Ascending aorta (tissue), 2 donors: ENCODE measurements at regions of chr5 and their contacts with region 1.

Region 1: GRCh38 chr5:87267574-87268125 is at the start of gene RASA1:
- DNase-seq: peak; percentile 70 to 95
- H3K4me3 ChIP-seq: peak within 1 kb of the TSS; percentile 70 to 84
- H3K27ac ChIP-seq: peak within 1 kb of the TSS; percentile 84 to 89
- H3K4me1 ChIP-seq: peaks cover 0 to 7% of the 10 kb centered on the region in 2 donors
- H3K27me3 ChIP-seq: no peaks in the 10 kb centered on the region
- CTCF ChIP-seq: no peak
- total RNA-seq, gene RASA1: 30.5 TPM

Region 2: GRCh38 chr5:86232246-86232645 is 1035.4 kb before region 1 on chr5:
- intact Hi-C with region 1: no loop called
- DNase-seq: no peak
- H3K4me3 ChIP-seq: no peak overlapping the region
- H3K27ac ChIP-seq: no peak overlapping the region
- H3K4me1 ChIP-seq: no peaks in the 10 kb centered on the region
- H3K27me3 ChIP-seq: no peaks in the 10 kb centered on the region
- CTCF ChIP-seq: no peak

Region 3: DNA sequence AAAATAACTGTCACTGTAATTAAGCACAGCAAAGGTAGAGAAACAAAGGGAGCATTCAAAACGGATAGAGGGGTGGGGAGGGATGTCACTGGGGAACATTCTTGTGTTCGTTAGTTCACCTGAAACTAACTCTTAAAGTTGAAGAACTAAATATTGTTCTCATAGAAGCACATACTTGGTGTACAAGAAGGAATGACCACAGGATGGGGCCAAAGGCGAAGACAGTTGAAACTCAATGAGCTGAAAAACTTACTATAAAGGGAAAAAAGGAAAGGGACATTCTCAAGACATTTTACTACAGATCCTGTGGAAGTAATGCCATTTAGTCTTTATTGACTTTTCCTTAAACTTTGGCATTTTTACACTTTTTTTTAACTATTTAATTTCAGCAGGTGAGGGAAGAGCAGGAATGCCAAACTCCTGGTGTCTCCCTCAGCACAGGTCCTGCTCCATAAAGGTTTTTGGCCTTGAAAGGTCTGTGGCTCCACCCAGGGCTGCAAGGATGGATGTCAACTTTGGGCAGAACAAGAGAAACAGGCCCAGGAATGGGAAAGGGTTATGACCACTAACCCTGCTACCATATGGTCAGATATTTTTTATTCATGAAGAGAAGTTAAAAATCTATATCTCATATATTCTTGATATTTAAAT is 197.6 kb before region 1 on chr5:
- intact Hi-C with region 1: loop called (anchors 10 kb)
- DNase-seq: peak in 1 of 2 donors; percentile 68
- H3K4me3 ChIP-seq: no peak overlapping the region
- H3K27ac ChIP-seq: no peak overlapping the region
- H3K4me1 ChIP-seq: no peaks in the 10 kb centered on the region
- H3K27me3 ChIP-seq: no peaks in the 10 kb centered on the region
- CTCF ChIP-seq: peak; percentile 38 to 73 (median 61)

Region 4: DNA sequence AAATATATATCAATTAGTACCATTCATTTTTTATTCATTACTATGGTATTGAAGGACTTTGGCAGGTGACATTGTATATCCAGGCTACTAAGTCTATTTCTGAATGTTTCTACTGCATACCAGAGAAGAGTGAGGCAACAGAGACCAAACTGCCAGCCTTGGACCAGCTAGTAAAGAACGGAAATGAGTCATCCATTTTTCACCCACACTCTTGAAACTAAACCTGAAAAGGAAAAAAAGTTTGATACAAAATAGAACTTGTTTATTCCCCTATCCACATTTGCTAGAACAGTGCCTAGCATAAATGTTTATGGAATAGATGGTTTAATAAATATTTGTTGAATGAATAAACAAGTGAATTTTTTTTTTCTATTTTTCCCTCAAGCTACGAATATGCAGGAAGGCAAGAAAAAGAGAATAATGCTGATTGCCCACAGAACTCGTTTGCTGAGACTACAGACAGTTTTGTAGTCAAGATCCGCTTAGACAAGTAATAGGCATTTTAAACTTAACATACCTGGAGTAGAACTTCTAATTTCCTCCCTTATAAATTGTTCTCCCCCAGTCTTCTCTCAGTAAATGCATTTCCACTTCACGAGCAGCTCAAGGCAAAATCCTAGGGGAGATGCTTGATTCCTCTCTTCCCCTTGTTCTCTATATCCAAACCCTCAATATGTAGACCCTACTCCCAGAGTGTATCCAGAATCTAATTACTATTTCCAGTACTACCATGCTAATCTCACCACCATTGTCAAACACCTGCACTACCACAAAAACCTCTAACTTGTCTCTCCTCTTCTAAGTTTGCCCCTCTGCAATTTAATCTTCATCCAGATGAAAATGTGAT is 146.1 kb before region 1 on chr5:
- intact Hi-C with region 1: loop called (anchors 2 kb)
- DNase-seq: peak; percentile 10 to 78
- H3K4me3 ChIP-seq: peak overlapping the region in 1 of 2 donors; percentile 11
- H3K27ac ChIP-seq: peak overlapping the region; percentile 80 to 89
- H3K4me1 ChIP-seq: peaks cover 0 to 16% of the 10 kb centered on the region in 2 donors
- H3K27me3 ChIP-seq: no peaks in the 10 kb centered on the region
- CTCF ChIP-seq: no peak

Region 5: DNA sequence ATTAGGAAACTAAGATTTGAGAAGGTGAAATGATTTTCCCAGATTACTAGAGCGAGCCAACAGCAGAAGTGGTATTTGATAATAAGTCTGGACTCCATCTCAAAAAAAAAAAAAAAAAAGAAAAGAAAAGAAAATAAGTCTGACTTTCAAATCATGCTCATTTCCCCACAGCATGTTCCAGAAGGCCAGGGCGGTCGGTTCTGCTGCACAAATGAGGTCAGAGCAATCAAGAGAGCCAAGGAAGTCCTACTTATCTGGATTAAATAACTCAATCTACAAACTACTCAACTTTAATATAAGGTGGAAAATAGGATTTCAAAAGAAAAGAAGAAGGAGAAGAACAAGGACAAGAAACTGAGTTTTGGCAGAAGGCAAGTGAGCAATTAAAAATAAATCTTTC is 130.4 kb before region 1 on chr5:
- intact Hi-C with region 1: loop called (anchors 5 kb)
- DNase-seq: peak; percentile 29 to 83
- H3K4me3 ChIP-seq: no peak overlapping the region
- H3K27ac ChIP-seq: peak overlapping the region; percentile 83 to 84
- H3K4me1 ChIP-seq: peaks cover 11 to 35% of the 10 kb centered on the region in 2 donors
- H3K27me3 ChIP-seq: no peaks in the 10 kb centered on the region
- CTCF ChIP-seq: no peak

Region 6: DNA sequence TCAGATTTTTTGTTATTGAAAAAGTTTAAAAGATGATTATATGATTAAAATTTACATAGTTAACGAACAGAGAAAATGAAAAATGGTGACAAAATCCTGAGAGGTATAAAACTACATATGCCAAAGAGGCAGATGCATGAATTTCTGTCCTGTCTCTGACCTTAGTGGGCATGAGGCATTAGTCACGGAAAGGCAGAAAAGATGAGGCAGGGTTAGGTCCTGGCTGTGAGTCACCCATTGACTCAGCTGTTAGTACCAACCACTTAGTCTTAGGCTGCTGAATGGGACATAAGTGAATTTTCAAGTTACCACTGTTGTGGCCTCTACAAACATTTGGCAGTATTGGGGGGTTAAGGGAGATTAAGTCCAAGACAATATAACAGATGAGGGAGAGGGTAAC is 33.1 kb after region 1 on chr5:
- intact Hi-C with region 1: no loop called
- DNase-seq: peak in 1 of 2 donors; percentile 66
- H3K4me3 ChIP-seq: no peak overlapping the region
- H3K27ac ChIP-seq: no peak overlapping the region
- H3K4me1 ChIP-seq: peaks cover 0 to 2% of the 10 kb centered on the region in 2 donors
- H3K27me3 ChIP-seq: no peaks in the 10 kb centered on the region
- CTCF ChIP-seq: no peak

Region 7: GRCh38 chr5:87412630-87413342 is 145.1 kb after region 1 on chr5 and contains the start of gene CCNH:
- intact Hi-C with region 1: loop called (anchors 5 kb)
- DNase-seq: peak; percentile 96 to 99
- H3K4me3 ChIP-seq: peak within 1 kb of the TSS; percentile 78 to 79
- H3K27ac ChIP-seq: peak within 1 kb of the TSS; percentile 95 to 98
- H3K4me1 ChIP-seq: peaks cover 0 to 2% of the 10 kb centered on the region in 2 donors
- H3K27me3 ChIP-seq: no peaks in the 10 kb centered on the region
- CTCF ChIP-seq: no peak
- total RNA-seq, gene CCNH: 65.7 TPM